ENCODE measurements at regions of chr1 and their contacts with region 1.

Region 1: DNA sequence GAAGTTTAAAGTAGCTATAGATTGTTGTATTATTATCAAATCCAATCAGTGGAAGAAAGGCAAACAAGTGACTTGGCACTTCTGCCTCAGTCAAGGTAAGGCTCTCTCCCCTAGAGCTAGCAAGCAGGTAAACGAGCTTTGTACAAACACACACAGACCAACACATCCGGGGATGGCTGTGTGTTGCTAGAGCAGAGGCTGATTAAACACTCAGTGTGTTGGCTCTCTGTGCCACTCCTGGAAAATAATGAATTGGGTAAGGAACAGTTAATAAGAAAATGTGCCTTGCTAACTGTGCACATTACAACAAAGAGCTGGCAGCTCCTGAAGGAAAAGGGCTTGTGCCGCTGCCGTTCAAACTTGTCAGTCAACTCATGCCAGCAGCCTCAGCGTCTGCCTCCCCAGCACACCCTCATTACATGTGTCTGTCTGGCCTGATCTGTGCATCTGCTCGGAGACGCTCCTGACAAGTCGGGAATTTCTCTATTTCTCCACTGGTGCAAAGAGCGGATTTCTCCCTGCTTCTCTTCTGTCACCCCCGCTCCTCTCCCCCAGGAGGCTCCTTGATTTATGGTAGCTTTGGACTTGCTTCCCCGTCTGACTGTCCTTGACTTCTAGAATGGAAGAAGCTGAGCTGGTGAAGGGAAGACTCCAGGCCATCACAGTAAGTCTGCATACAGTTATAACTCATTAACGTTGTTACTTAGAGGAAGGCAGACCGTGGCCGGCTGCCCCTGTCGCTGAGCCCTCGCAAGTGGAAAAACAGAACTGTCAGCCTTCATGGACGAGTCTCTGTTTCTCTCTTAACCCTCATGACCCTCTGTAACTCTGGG is at the start of gene PALMD:
- DNase-seq: peak; percentile 33
- H3K4me3 Mint-ChIP-seq: peak within 1 kb of the TSS; percentile 92
- H3K27ac Mint-ChIP-seq: peak within 1 kb of the TSS; percentile 94
- H3K4me1 Mint-ChIP-seq: peaks cover 29% of the 10 kb centered on the region
- H3K27me3 Mint-ChIP-seq: no peaks in the 10 kb centered on the region
- CTCF ChIP-seq: no peak
- total RNA-seq, gene PALMD: 6.8 and 19.2 TPM in 2 replicates

Region 2: GRCh38 chr1:99533909-99534637 is 111.8 kb before region 1 on chr1:
- CTCF ChIA-PET with region 1: interaction called, 3 read pairs
- intact Hi-C with region 1: loop called (anchors 5 kb)
- DNase-seq: no peak
- H3K4me3 Mint-ChIP-seq: no peak overlapping the region
- H3K27ac Mint-ChIP-seq: no peak overlapping the region
- H3K4me1 Mint-ChIP-seq: peaks cover 47% of the 10 kb centered on the region
- H3K27me3 Mint-ChIP-seq: no peaks in the 10 kb centered on the region
- CTCF ChIP-seq: no peak

Region 3: GRCh38 chr1:99557546-99558202 is 88.2 kb before region 1 on chr1:
- CTCF ChIA-PET with region 1: interaction called, 3 read pairs
- intact Hi-C with region 1: loop called (anchors 2 kb)
- DNase-seq: no peak
- H3K4me3 Mint-ChIP-seq: no peak overlapping the region
- H3K27ac Mint-ChIP-seq: peak overlapping the region; percentile 85
- H3K4me1 Mint-ChIP-seq: peaks cover 64% of the 10 kb centered on the region
- H3K27me3 Mint-ChIP-seq: no peaks in the 10 kb centered on the region
- CTCF ChIP-seq: no peak

Region 4: DNA sequence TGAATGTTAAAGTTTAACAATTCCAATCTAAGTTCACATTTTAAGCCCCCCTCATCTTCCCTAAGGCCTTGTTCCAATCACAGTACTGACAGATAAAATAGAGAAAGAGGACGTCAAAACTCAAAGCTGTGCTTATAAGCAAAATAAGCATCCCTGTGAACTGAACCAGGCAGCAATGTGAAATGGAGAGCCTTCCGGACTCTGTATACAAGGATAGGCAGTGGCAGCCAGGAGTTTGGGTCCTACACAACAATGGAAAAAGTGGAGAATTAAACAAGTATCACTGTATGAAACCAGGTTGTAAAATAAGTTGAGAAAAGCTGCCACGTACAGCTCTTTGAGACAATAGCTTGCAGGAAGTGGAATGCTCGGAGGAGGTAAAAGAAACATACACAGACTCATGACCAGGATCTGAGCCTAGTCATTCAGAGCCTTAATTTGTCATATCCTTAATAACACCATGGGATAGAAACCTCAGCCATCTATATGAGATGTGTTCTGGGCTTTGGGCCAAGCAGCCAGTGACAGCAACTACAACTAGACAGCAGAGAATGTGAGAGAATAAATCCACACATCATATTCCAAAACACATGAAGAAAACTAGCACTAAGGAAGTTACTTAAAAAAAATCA is 55.2 kb before region 1 on chr1:
- CTCF ChIA-PET with region 1: interaction called, 3 read pairs
- intact Hi-C with region 1: loop called (anchors 2 kb)
- DNase-seq: peak; percentile 19
- H3K4me3 Mint-ChIP-seq: no peak overlapping the region
- H3K27ac Mint-ChIP-seq: peak overlapping the region; percentile 80
- H3K4me1 Mint-ChIP-seq: peaks cover 26% of the 10 kb centered on the region
- H3K27me3 Mint-ChIP-seq: no peaks in the 10 kb centered on the region
- CTCF ChIP-seq: no peak

Region 5: GRCh38 chr1:99659755-99660210 is 13.9 kb after region 1 on chr1:
- CTCF ChIA-PET with region 1: interaction called, 6 read pairs
- intact Hi-C with region 1: loop called (anchors 1 kb)
- DNase-seq: peak; percentile 52
- H3K4me3 Mint-ChIP-seq: peak overlapping the region; percentile 46
- H3K27ac Mint-ChIP-seq: peak overlapping the region; percentile 92
- H3K4me1 Mint-ChIP-seq: peaks cover 10% of the 10 kb centered on the region
- H3K27me3 Mint-ChIP-seq: no peaks in the 10 kb centered on the region
- CTCF ChIP-seq: no peak

Region 6: GRCh38 chr1:99685516-99686180 is 39.7 kb after region 1 on chr1:
- CTCF ChIA-PET with region 1: no interaction called
- intact Hi-C with region 1: no loop called
- DNase-seq: peak; percentile 70
- H3K4me3 Mint-ChIP-seq: no peak overlapping the region
- H3K27ac Mint-ChIP-seq: no peak overlapping the region
- H3K4me1 Mint-ChIP-seq: peaks cover 9% of the 10 kb centered on the region
- H3K27me3 Mint-ChIP-seq: no peaks in the 10 kb centered on the region
- CTCF ChIP-seq: peak; percentile 37

Region 7: DNA sequence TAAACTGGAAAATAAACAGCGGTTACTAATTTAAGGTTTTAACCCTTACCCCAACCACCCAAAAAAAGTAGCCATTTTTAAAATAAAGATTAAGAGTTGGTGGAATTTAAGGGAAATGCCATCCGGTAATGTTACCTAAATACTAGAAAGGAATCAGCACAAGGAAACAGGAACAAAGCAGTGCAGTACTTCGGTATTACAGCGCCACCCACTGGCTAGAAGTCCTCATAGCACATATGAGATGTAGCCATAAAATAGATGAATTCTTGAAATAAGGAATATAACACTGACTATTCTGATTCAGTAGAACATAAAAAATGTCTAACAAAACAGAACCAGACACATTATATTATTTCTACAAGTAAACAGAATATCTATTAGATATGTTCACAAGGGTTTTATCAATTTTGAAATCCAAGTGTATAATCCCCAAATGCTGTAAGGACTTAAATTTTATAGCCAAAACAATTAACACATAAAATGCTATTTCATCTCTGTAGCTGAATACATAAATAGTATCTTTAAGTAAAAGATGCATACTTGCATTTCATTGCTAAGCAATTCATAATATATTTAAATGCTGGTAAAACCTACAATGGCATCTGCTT is 61.7 kb after region 1 on chr1:
- CTCF ChIA-PET with region 1: no interaction called
- intact Hi-C with region 1: no loop called
- DNase-seq: peak; percentile 60
- H3K4me3 Mint-ChIP-seq: no peak overlapping the region
- H3K27ac Mint-ChIP-seq: no peak overlapping the region
- H3K4me1 Mint-ChIP-seq: no peaks in the 10 kb centered on the region
- H3K27me3 Mint-ChIP-seq: no peaks in the 10 kb centered on the region
- CTCF ChIP-seq: peak; percentile 37

Region 8: DNA sequence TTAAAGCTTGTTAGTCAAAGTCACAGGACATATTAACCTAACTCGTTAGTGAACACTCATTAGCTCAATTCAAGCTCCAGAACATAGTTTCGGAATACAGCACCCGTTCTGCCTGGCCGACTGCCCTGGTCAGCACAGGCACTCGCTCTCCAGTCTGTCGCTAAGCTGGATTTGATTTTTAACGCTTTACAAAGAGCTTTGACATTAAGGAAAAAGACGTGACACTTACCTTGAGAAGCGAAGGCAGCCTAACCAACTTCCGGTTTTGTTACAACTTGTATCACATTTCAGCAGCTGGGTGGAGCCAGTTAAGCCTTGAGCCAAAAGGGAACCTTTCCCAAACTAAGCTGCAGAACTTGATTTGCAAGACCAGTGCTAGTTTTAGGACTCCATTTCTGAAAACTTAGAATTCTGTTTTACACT is 120.5 kb after region 1 on chr1 and contains the start of gene FRRS1:
- CTCF ChIA-PET with region 1: no interaction called
- intact Hi-C with region 1: no loop called
- DNase-seq: peak; percentile 64
- H3K4me3 Mint-ChIP-seq: peak within 1 kb of the TSS; percentile 85
- H3K27ac Mint-ChIP-seq: peak within 1 kb of the TSS; percentile 94
- H3K4me1 Mint-ChIP-seq: peaks cover 19% of the 10 kb centered on the region
- H3K27me3 Mint-ChIP-seq: no peaks in the 10 kb centered on the region
- CTCF ChIP-seq: no peak
- total RNA-seq, gene FRRS1: 39.1 and 46.5 TPM in 2 replicates

Measured in Calu3 (cell line).